GM10248 (cell line): ENCODE measurements at regions of chr1 and their contacts with region 1.

Region 1: DNA sequence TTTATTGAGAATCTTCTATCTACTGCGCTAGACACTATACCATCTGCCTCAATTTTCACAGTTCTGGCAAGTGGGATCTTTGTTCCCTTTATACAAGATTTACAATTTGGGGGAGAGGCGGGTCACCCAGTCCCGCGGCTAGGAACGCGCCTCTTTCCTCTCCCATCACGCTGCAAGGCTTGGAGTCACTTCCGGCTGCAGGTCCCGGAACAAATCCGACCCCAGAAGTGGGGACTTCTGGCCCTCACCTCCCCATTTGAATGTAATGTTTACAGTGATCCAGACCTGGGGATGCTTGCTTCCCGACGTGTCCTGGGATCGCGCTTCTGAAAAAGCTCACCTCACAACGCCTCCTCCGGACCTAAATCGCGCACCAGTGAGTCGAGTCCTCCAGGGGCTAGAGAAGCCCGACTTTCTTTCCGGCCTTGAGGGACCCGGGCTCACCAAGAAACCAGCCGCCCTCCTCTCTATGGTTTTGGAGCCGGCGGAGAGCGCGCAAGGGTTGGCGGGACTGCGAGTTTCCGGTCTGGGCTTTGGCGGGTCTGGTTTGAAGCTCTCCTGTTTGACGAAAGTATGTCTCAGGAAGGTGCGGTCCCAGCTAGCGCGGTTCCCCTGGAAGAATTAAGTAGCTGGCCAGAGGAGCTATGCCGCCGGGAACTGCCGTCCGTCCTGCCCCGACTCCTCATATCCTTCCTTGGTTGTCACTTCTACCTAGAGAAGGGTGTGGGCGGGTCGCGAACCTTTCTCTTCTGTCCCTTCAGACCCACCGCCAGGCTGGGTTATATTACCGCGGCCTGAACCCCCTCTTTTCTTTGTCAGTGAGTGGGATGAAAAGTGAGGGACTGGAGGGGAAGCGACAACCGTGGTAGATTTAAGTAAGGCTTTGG is at the start of gene METTL18:
- DNase-seq: peak; percentile 89
- CTCF ChIP-seq: no peak

Region 2: DNA sequence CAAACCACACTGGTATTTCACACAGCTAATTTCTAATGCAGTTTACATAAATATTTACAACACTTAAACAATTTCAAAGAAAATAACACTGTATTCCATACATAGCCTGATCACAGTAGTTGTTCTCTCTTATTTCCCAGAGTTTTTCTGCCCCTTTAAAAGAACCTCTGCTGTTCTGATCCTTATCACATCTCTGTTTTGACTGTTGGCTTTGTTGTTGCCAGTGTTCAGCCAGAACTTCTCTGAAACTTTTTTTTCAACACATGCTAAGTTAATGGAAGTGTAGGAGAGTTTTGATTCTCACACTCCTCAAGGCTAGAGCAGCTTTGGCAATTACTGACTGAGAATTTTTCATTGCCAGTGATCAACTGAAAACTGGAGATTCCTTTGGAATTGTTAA is 72.0 kb before region 1 on chr1:
- CTCF ChIA-PET with region 1: no interaction called
- POLR2A ChIA-PET with region 1: no interaction called
- DNase-seq: no peak
- CTCF ChIP-seq: no peak

Region 3: GRCh38 chr1:169809370-169810095 is 14.8 kb after region 1 on chr1:
- CTCF ChIA-PET with region 1: interaction called, 16 read pairs
- POLR2A ChIA-PET with region 1: no interaction called
- DNase-seq: peak; percentile 42
- CTCF ChIP-seq: peak; percentile 38

Region 4: GRCh38 chr1:169928438-169929209 is 133.9 kb after region 1 on chr1:
- CTCF ChIA-PET with region 1: no interaction called
- POLR2A ChIA-PET with region 1: no interaction called
- DNase-seq: no peak
- CTCF ChIP-seq: peak; percentile 65